ENCODE measurements at regions of chr11 and their contacts with region 1.

Region 1: GRCh38 chr11:65040847-65041621 is at the start of gene SAC3D1:
- H3K4me3 ChIP-seq: peak within 1 kb of the TSS; percentile 80
- H3K27ac ChIP-seq: peak within 1 kb of the TSS; percentile 75
- H3K4me1 ChIP-seq: no peaks in the 10 kb centered on the region
- CTCF ChIP-seq: no peak

Region 2: DNA sequence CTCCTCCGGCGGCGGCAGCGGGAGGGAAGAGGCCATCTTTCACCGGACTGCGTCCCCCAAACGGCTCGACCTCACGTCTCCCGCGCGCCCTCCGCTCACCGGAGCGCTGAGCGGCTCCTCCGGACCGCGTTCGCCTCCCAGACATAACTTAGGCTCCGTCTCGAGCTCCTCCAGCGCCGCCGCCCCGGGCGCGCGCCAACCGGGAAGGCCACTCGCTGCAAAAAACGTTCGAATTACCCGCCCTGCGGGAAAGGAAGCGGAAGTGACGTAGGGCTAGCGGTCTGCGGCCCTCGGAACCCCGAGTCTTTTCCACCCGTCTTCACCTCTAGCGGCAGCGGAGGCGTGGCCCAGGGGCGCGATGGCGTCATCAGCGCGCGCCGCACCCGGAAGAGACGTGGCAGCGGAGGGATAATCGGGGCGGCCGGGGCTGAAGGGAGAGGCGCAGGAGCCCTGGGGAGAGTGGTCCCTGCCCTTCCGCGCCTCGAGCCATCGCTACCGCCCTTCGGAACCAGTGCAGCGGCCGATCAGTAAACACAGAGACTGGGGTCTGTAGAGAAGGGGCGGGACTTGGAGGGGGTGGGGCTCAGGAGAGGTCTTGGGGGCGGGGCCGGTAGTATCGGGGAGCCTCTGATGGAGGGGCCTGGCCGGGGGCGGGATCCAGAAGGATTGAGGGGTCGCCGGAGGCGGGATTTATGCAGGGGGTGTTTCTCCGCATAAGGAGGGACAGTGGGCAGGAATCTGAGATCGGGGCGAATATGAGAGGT is 43.0 kb after region 1 on chr11 and contains the starts of genes CDCA5 and ZFPL1:
- CTCF ChIA-PET with region 1: interaction called, 4 read pairs
- POLR2A ChIA-PET with region 1: interaction called, 13 read pairs
- H3K4me3 ChIP-seq: peak within 1 kb of the TSS; percentile 92
- H3K27ac ChIP-seq: peak within 1 kb of the TSS; percentile 81
- H3K4me1 ChIP-seq: peaks cover 3% of the 10 kb centered on the region; the same call in 1 of the 2 replicates
- CTCF ChIP-seq: no peak; the same call in 1 of the 2 replicates